ENCODE measurements at regions of chr20 and their contacts with region 1.

Region 1: DNA sequence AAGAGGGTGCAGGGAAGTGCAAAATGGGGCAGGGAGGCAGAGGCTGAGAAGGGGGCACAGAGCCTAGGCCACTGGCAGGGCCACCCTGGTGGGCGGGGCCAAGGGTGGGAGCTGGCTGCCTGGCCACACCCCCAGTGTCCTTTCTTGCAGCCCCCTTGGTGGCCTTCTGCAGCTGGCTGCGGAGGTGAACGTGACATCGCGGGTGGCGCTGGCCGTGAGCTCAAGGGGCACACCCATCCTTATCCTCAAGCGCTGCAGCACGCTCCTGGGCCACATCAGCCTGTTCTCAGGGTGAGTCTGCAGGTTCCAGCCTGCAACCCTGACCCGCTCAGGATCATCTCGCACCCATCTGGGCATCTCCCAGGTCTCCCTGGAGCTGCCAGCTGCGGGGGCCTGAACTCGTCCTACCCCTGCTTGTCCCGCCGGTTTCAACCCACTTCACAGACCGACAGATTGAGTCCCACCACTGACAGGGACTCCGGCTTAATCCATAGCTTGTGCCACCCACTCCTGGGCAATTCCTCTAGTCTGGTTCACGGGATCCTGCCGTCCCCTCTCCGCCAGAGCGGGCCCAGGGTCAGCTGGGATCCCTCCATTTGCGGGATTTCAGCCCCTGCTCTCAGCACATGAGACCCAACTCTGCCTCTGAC is 6.2 kb downstream of the BPIFB3 start:
- DNase-seq: no peak
- H3K4me3 ChIP-seq: no peak overlapping the region
- H3K27ac ChIP-seq: no peak overlapping the region
- H3K4me1 ChIP-seq: no peaks in the 10 kb centered on the region
- H3K27me3 ChIP-seq: no peaks in the 10 kb centered on the region
- CTCF ChIP-seq: no peak
- POLR2A ChIP-seq: no peak

Region 2: GRCh38 chr20:32040142-32041022 is 1019.5 kb before region 1 on chr20:
- intact Hi-C with region 1: loop called (anchors 5 kb)
- DNase-seq: no peak
- H3K4me3 ChIP-seq: no peak overlapping the region
- H3K27ac ChIP-seq: no peak overlapping the region
- H3K4me1 ChIP-seq: no peaks in the 10 kb centered on the region
- H3K27me3 ChIP-seq: peaks cover 0 to 14% of the 10 kb centered on the region in 2 donors
- CTCF ChIP-seq: no peak
- POLR2A ChIP-seq: no peak